H1 (cell line): ENCODE measurements at regions of chr14 and their contacts with region 1.

Region 1: GRCh38 chr14:76056128-76056527 is 70.6 kb downstream of the IFT43 start:
- DNase-seq: no peak
- H3K4me3 ChIP-seq: no peak overlapping the region
- H3K27ac ChIP-seq: no peak overlapping the region
- H3K4me1 ChIP-seq: peaks cover 0 to 8% (median 5%) of the 10 kb centered on the region in 4 experiments
- H3K27me3 ChIP-seq: no peaks in the 10 kb centered on the region
- CTCF ChIP-seq: peak; percentile 54 to 72 (median 63)
- EP300 ChIP-seq: no peak
- POLR2A ChIP-seq: no peak
- RAD21 ChIP-seq: peak; percentile 48 to 65; a peak in 3 of 4 replicates

Region 2: GRCh38 chr14:76077333-76077732 is 21.2 kb after region 1 on chr14:
- CTCF ChIA-PET with region 1: interaction called, 15 read pairs
- POLR2A ChIA-PET with region 1: no interaction called
- DNase-seq: no peak
- H3K4me3 ChIP-seq: no peak overlapping the region
- H3K27ac ChIP-seq: no peak overlapping the region
- H3K4me1 ChIP-seq: no peaks in the 10 kb centered on the region
- H3K27me3 ChIP-seq: no peaks in the 10 kb centered on the region
- CTCF ChIP-seq: peak; percentile 5 to 24 (median 10); a peak in 3 of 4 replicates
- EP300 ChIP-seq: no peak
- POLR2A ChIP-seq: no peak
- RAD21 ChIP-seq: peak; percentile 39 to 47; a peak in 3 of 4 replicates

Region 3: GRCh38 chr14:76083796-76084765 is 28.0 kb after region 1 on chr14:
- CTCF ChIA-PET with region 1: interaction called, 13 read pairs
- POLR2A ChIA-PET with region 1: no interaction called
- DNase-seq: no peak
- H3K4me3 ChIP-seq: 0 out of 8 replicates have a peak overlapping the region, but pooled peaks of 1 of the 4 experiments have one; percentile 11
- H3K27ac ChIP-seq: no peak overlapping the region
- H3K4me1 ChIP-seq: peaks cover 9 to 17% (median 13%) of the 10 kb centered on the region in 4 experiments
- H3K27me3 ChIP-seq: peaks cover 0 to 3% (median 0%) of the 10 kb centered on the region in 4 experiments; a peak in 2 of 7 replicates
- CTCF ChIP-seq: no peak
- EP300 ChIP-seq: no peak
- POLR2A ChIP-seq: no peak
- RAD21 ChIP-seq: peak in 1 of 2 experiments; percentile 8; a peak in 1 of 4 replicates

Region 4: GRCh38 chr14:76115010-76115422 is 58.9 kb after region 1 on chr14:
- CTCF ChIA-PET with region 1: interaction called, 20 read pairs
- POLR2A ChIA-PET with region 1: no interaction called
- DNase-seq: no peak
- H3K4me3 ChIP-seq: no peak overlapping the region
- H3K27ac ChIP-seq: no peak overlapping the region
- H3K4me1 ChIP-seq: peaks cover 21 to 39% (median 25%) of the 10 kb centered on the region in 4 experiments
- H3K27me3 ChIP-seq: peaks cover 0 to 4% (median 3%) of the 10 kb centered on the region in 4 experiments; a peak in 2 of 7 replicates
- CTCF ChIP-seq: peak in 2 of 3 experiments; percentile 22 to 26; a peak in 2 of 4 replicates
- EP300 ChIP-seq: no peak
- POLR2A ChIP-seq: no peak
- RAD21 ChIP-seq: peak; percentile 43 to 55